Posterior vena cava (tissue), 2 donors: ENCODE measurements at regions of chr16 and their contacts with region 1.

Region 1: GRCh38 chr16:69691980-69692911 is 34.1 kb downstream of the NQO1 start:
- DNase-seq: no peak

Region 2: DNA sequence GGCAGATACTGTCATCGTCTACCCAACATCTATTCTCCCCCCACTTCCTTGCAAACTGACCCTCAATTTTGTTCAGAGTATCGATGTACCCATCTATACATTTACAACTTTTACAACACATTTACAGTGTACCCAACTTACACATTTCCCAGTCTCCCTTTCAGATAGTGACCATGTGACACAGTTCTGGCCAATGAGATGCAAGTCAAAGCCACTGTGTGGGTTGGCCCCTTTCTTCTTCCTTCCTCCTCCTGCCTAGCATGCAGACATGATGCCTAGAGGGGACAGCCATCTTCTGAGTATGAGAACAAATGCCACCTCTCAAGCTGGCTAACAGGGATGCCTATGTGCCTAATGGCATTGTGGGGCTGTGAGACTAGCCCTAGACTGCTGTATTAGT is 137.8 kb before region 1 on chr16:
- intact Hi-C with region 1: no loop called
- DNase-seq: no peak

Region 3: GRCh38 chr16:69644790-69645189 is 47.5 kb before region 1 on chr16:
- intact Hi-C with region 1: loop called in 1 of 2 experiments (anchors 1 kb)
- DNase-seq: no peak